MCF 10A (cell line): ENCODE measurements at regions of chr11 and their contacts with region 1.

Region 1: GRCh38 chr11:11036848-11037732 is 179.2 kb upstream of the ZBED5 start:
- DNase-seq: peak; percentile 74
- H3K4me3 Mint-ChIP-seq: no peak overlapping the region
- H3K27ac Mint-ChIP-seq: no peak overlapping the region
- H3K4me1 Mint-ChIP-seq: peaks cover 7% of the 10 kb centered on the region
- H3K27me3 Mint-ChIP-seq: peaks cover 10% of the 10 kb centered on the region
- CTCF ChIP-seq: peak; percentile 75

Region 2: DNA sequence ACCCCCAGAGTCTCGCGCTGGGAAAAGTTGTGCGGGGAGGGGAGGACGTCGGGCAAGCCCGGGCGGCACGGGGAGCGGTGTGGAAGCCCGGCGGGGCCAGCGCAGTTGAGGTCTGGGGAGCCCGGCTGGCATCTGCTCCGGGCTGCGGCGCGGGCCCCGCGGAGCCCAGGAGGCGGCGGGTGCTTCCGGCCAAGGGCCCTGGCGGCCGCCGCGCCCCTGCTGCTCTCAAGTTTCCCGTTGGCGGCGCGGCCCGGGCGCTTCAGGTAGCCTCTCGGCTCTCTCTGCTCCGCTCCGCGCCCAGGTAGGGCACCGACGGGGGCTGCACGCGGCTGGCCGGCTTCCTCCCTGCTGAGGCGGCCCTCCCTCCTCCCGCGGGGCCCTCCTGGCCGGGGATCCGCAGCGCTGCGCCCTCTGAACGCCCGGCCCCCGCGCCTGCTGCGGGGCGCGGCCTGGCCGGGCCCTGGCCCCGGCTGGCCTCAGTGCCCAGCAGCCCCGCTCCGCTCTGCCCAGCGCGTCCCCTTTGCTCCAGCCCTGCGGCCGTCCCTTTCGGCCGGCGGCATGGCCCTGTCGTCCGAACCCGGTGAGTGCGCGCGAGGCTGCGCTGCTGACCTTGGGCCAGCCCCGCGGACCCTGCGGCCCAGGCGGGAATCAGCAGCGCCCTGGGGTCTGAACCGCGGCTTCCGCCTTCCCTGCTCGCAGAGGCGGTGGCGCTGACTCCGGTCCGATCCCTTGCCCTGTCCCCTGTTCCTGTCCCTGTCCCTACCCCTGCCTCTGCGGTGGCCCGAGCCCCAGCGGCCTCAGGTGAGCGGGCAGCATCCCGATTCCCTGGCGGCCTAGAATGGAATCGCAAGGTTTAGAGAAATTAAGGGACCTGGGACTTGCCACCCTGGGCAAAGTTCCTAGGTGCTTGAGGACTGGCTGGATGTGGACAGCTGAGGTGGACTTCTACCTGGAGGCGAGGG is 586.3 kb before region 1 on chr11:
- CTCF ChIA-PET with region 1: no interaction called
- POLR2A ChIA-PET with region 1: no interaction called
- intact Hi-C with region 1: no loop called
- DNase-seq: peak; percentile 49
- H3K4me3 Mint-ChIP-seq: peak overlapping the region; percentile 78
- H3K27ac Mint-ChIP-seq: peak overlapping the region; percentile 71
- H3K4me1 Mint-ChIP-seq: peaks cover 6% of the 10 kb centered on the region
- H3K27me3 Mint-ChIP-seq: no peaks in the 10 kb centered on the region
- CTCF ChIP-seq: peak; percentile 33

Region 3: GRCh38 chr11:11057472-11057854 is 20.4 kb after region 1 on chr11:
- CTCF ChIA-PET with region 1: interaction called, 13 read pairs
- POLR2A ChIA-PET with region 1: no interaction called
- intact Hi-C with region 1: no loop called
- DNase-seq: no peak
- H3K4me3 Mint-ChIP-seq: no peak overlapping the region
- H3K27ac Mint-ChIP-seq: no peak overlapping the region
- H3K4me1 Mint-ChIP-seq: no peaks in the 10 kb centered on the region
- H3K27me3 Mint-ChIP-seq: no peaks in the 10 kb centered on the region
- CTCF ChIP-seq: no peak

Region 4: GRCh38 chr11:11265994-11266606 is 229.0 kb after region 1 on chr11:
- CTCF ChIA-PET with region 1: interaction called, 21 read pairs
- POLR2A ChIA-PET with region 1: no interaction called
- intact Hi-C with region 1: no loop called
- DNase-seq: peak; percentile 62
- H3K4me3 Mint-ChIP-seq: no peak overlapping the region
- H3K27ac Mint-ChIP-seq: no peak overlapping the region
- H3K4me1 Mint-ChIP-seq: peaks cover 9% of the 10 kb centered on the region
- H3K27me3 Mint-ChIP-seq: no peaks in the 10 kb centered on the region
- CTCF ChIP-seq: peak; percentile 84

Region 5: GRCh38 chr11:11701070-11701469 is 664.0 kb after region 1 on chr11:
- CTCF ChIA-PET with region 1: interaction called, 3 read pairs
- POLR2A ChIA-PET with region 1: no interaction called
- intact Hi-C with region 1: loop called (anchors 10 kb)
- DNase-seq: peak; percentile 60
- H3K4me3 Mint-ChIP-seq: no peak overlapping the region
- H3K27ac Mint-ChIP-seq: peak overlapping the region; percentile 44
- H3K4me1 Mint-ChIP-seq: peaks cover 7% of the 10 kb centered on the region
- H3K27me3 Mint-ChIP-seq: no peaks in the 10 kb centered on the region
- CTCF ChIP-seq: peak; percentile 33